Mammary epithelial cell (primary cell): ENCODE measurements at regions of chr9 and their contacts with region 1.

Region 1: GRCh38 chr9:116101516-116101915 is 52.1 kb upstream of the PAPPA start:
- DNase-seq: peak; percentile 87
- H3K4me3 ChIP-seq: no peak overlapping the region
- H3K27ac ChIP-seq: peak overlapping the region; percentile 73
- H3K4me1 ChIP-seq: peaks cover 30% of the 10 kb centered on the region
- H3K27me3 ChIP-seq: no peaks in the 10 kb centered on the region
- CTCF ChIP-seq: no peak

Region 2: DNA sequence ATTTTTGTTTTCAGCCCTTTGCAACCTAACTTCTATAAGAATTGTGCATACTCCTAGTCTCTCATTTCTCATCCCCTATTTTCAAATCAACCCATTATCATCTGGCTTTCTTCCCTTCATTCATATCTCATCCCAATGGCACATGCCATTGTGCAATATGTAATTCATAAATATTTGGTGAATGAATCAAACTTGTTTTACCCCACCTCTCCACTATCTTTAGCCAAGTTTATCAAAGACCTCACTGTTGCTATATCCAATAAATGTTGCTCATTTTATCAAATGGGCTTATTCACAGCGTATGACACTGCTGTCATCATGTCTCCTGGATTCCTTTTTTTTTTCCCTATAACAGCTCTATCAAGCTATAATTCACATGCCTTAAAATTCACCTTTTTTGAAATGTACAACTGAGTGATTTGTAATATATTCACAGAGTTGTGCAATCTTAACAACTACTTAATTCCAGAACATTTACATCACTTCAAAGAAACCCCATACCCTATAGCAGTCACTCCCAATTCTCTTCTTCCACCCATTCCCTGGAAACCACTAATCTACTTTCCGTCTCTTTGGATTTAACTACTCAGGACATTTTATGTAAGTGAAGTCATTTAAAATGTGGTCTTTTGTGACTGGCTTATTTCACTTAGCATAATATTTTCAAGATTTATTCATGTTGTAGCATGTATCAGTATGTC is 162.3 kb before region 1 on chr9:
- CTCF ChIA-PET with region 1: no interaction called
- dilution Hi-C with region 1: no loop called
- in situ Hi-C with region 1: loop called in 1 of 2 experiments (anchors 10 kb)
- intact Hi-C with region 1: loop called (anchors 1 kb)
- DNase-seq: peak; percentile 91
- H3K4me3 ChIP-seq: no peak overlapping the region
- H3K27ac ChIP-seq: peak overlapping the region; percentile 79
- H3K4me1 ChIP-seq: peaks cover 45% of the 10 kb centered on the region
- H3K27me3 ChIP-seq: no peaks in the 10 kb centered on the region
- CTCF ChIP-seq: no peak

Region 3: DNA sequence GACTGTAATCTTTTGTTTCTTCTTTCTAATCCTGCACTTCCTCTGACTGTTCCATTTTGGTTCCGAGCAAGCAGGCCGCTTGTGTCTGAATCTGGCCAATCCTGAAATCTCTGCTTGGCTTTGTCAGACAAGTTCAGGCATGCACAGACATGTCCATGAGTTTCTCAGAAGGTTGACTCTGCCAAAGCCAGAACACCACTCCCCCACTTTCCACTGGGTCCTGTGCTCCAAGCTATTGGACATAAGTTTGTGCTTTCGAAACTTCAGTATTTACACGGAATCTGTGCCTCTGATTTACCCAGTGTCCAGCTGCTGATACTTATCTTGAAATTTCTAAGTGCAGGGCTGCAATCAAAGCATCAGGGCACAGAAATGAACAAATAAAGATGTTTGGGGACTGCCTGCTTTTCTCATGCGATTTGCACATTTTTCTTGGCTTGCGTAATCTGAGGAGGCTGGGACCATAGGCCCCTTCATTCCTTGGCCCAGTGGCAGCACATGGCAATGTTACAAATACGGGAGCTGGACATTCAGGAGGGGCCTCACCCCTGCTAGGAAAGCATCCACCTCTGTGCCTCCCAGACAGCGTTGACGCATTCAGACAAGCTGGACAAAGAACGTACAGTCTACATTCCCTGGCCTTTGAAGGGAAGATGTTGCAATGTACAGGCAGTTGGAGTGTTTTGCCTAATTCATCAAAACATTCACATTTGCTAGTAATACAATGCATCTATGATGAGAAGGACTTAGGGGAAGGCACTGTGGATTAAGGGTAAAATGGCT is 157.2 kb before region 1 on chr9:
- CTCF ChIA-PET with region 1: no interaction called
- dilution Hi-C with region 1: no loop called
- in situ Hi-C with region 1: loop called in 1 of 2 experiments (anchors 10 kb)
- intact Hi-C with region 1: loop called (anchors 1 kb)
- DNase-seq: peak; percentile 98
- H3K4me3 ChIP-seq: peak overlapping the region in 1 of 3 experiments; percentile 6
- H3K27ac ChIP-seq: peak overlapping the region; percentile 95
- H3K4me1 ChIP-seq: peaks cover 54% of the 10 kb centered on the region
- H3K27me3 ChIP-seq: no peaks in the 10 kb centered on the region
- CTCF ChIP-seq: no peak

Region 4: GRCh38 chr9:116000748-116001329 is 100.7 kb before region 1 on chr9:
- CTCF ChIA-PET with region 1: no interaction called
- dilution Hi-C with region 1: no loop called
- in situ Hi-C with region 1: no loop called
- intact Hi-C with region 1: loop called (anchors 1 kb)
- DNase-seq: no peak
- H3K4me3 ChIP-seq: no peak overlapping the region
- H3K27ac ChIP-seq: no peak overlapping the region
- H3K4me1 ChIP-seq: peaks cover 34% of the 10 kb centered on the region
- H3K27me3 ChIP-seq: no peaks in the 10 kb centered on the region
- CTCF ChIP-seq: peak; percentile 48 to 61

Region 5: DNA sequence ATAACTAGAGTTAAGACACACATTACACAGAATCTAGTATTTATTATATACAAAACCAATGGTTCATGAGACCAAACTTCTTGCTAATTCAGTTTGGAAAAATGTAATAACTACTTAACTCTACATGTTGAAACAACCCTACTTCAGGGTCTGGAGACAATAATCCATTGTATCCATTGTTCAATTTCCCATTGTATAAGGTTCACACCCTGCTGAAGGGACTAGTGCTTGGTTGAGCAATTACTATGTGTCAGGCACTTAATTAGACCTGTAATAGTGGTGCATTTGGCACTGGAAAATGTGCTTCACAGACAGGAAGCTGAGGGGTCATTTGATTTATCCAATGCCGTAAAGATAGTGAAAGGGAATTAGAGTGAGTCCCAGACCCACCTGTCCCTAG is 62.2 kb before region 1 on chr9:
- CTCF ChIA-PET with region 1: no interaction called
- dilution Hi-C with region 1: no loop called
- in situ Hi-C with region 1: no loop called
- intact Hi-C with region 1: loop called (anchors 5 kb)
- DNase-seq: peak; percentile 80
- H3K4me3 ChIP-seq: no peak overlapping the region
- H3K27ac ChIP-seq: peak overlapping the region; percentile 75
- H3K4me1 ChIP-seq: peaks cover 16% of the 10 kb centered on the region
- H3K27me3 ChIP-seq: no peaks in the 10 kb centered on the region
- CTCF ChIP-seq: no peak